Activated CD4-positive, alpha-beta T cell treated with anti-CD3 and anti-CD28 coated beads, Interleukin-2, amount 10 ng/mL, durations not matched to agents 24 days and 14 days (primary cell): ENCODE measurements at regions of chr11 and their contacts with region 1.

Region 1: GRCh38 chr11:57426929-57427726 is at the start of gene SLC43A3:
- DNase-seq: peak; percentile 91
- H3K4me3 Mint-ChIP-seq: peak within 1 kb of the TSS; percentile 96
- H3K27ac Mint-ChIP-seq: peak within 1 kb of the TSS; percentile 95
- H3K4me1 Mint-ChIP-seq: peaks cover 43% of the 10 kb centered on the region
- H3K27me3 Mint-ChIP-seq: peaks cover 9% of the 10 kb centered on the region
- total RNA-seq, gene SLC43A3: 255 and 261 TPM in 2 replicates

Region 2: DNA sequence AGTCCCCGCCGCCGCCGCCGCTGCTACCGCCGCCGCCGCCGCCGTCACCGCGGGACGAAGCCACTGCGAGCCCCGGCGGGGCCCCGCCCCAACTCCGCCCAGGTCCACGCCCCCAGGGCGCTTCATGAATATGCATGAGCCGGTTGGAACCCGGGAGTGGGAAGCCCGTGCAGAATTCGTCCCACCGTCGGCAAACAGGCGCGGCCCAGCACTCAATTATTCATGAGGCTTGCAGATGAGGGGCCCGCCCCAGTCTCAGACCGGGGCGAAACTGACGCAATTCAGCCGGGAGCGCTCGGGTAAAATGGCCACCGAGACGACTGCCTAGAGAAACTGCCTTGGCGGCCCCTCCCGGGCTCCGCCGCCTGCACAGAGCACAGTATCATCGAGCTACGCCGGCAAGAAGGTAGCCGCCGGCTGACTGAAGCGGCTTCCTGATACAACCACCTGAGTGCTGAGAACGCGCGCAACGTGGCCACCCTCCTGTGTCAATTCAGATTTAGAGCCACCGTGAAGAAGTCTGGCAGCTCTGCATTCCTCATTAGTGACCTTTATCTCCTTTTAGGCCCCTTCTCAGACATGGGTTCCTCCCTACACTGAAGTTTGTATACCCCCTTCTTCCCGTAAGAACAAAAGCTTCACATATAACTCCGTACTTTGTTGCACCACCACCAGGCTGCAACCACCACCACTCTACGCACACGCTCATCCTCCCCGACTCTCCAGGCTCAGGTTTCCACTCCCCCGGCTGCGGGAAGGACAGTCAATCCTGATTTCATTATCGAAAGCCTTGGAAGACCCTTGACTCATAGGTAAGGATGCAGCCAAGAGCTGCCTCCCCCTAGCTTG is 102.0 kb before region 1 on chr11 and contains the start of gene TNKS1BP1:
- intact Hi-C with region 1: loop called (anchors 1 kb)
- DNase-seq: peak; percentile 96
- H3K4me3 Mint-ChIP-seq: peak within 1 kb of the TSS; percentile 83
- H3K27ac Mint-ChIP-seq: peak within 1 kb of the TSS; percentile 93
- H3K4me1 Mint-ChIP-seq: peaks cover 45% of the 10 kb centered on the region
- H3K27me3 Mint-ChIP-seq: no peaks in the 10 kb centered on the region
- total RNA-seq, gene TNKS1BP1: 23.7 and 24.2 TPM in 2 replicates

Region 3: DNA sequence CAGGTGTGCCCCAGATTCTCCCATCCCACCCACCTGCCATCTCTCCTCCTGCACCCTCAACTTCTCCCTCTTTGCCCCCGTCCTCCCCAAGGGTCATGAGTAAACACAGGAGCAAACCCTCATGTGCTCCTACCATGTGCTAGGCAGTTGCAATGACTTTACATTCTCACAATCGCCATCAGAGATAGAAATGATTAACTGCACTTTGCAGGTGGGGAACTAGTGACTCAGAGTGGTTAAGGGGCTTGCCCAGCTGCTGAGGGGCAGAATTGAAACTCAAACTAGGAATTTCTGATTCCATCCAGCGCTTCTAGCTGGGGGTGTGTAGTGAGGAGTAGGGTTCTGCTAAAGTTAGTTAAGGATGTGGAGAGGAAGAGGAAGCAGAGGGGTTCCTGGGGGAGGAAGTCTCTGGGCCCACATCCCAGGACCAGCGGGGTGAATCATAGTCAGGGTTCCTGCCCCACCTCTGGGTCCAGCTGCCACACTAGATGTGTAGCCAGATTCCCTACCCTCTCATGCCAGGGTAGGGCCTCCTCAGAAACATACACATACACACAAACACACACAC is 20.7 kb before region 1 on chr11:
- intact Hi-C with region 1: loop called (anchors 1 kb)
- DNase-seq: no peak
- H3K4me3 Mint-ChIP-seq: peak overlapping the region; percentile 75
- H3K27ac Mint-ChIP-seq: peak overlapping the region; percentile 98
- H3K4me1 Mint-ChIP-seq: peaks cover 41% of the 10 kb centered on the region
- H3K27me3 Mint-ChIP-seq: no peaks in the 10 kb centered on the region

Region 4: DNA sequence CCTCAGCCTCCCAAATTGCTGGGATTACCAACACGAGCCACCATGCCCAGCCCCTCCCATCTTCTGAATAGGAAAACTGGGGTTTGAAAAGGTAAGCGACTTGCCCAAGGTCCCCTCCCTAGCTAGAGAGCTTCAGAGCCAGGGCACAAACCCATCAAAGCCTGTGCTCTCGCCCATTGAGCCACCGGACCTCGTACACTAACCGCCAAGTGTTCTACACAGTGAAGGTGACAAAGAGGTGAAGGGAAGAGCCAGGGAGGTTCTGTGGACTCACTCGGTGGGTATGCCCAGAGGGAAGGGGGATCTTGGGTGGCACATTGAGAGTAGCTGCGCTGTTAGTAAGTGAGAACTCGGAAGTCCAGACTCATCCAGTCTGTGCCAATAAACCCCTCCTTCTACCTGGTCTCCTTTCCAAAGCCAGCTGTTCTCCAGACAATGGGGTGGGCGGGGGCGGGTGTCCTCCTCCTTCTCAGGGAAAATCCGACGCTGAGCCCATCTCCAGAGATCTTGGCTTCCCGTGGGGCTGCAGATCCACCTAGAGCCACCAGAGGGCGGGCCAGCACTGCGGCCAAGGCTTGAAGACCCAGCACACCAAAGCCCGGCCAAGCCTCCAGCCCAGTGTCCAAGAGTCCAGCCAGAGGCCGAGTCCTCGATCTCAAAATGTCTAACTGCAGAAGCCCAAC is 30.0 kb after region 1 on chr11:
- intact Hi-C with region 1: loop called (anchors 2 kb)
- DNase-seq: peak; percentile 93
- H3K4me3 Mint-ChIP-seq: peak overlapping the region; percentile 62
- H3K27ac Mint-ChIP-seq: peak overlapping the region; percentile 29
- H3K4me1 Mint-ChIP-seq: peaks cover 26% of the 10 kb centered on the region
- H3K27me3 Mint-ChIP-seq: peaks cover 52% of the 10 kb centered on the region

Region 5: GRCh38 chr11:57657194-57658022 is 230.3 kb after region 1 on chr11 and contains the start of gene CLP1:
- intact Hi-C with region 1: loop called (anchors 1 kb)
- DNase-seq: peak; percentile 100
- H3K4me3 Mint-ChIP-seq: peak within 1 kb of the TSS; percentile 86
- H3K27ac Mint-ChIP-seq: peak within 1 kb of the TSS; percentile 88
- H3K4me1 Mint-ChIP-seq: peaks cover 18% of the 10 kb centered on the region
- H3K27me3 Mint-ChIP-seq: no peaks in the 10 kb centered on the region
- total RNA-seq, gene CLP1: 18.5 and 19.8 TPM in 2 replicates

Region 6: GRCh38 chr11:58573451-58574104 is 1146.5 kb after region 1 on chr11:
- intact Hi-C with region 1: loop called (anchors 2 kb)
- DNase-seq: peak; percentile 77
- H3K4me3 Mint-ChIP-seq: peak overlapping the region; percentile 93
- H3K27ac Mint-ChIP-seq: peak overlapping the region; percentile 95
- H3K4me1 Mint-ChIP-seq: peaks cover 66% of the 10 kb centered on the region
- H3K27me3 Mint-ChIP-seq: peaks cover 4% of the 10 kb centered on the region